CD8-positive, alpha-beta memory T cell (primary cell): ENCODE measurements at regions of chr17 and their contacts with region 1.

Region 1: DNA sequence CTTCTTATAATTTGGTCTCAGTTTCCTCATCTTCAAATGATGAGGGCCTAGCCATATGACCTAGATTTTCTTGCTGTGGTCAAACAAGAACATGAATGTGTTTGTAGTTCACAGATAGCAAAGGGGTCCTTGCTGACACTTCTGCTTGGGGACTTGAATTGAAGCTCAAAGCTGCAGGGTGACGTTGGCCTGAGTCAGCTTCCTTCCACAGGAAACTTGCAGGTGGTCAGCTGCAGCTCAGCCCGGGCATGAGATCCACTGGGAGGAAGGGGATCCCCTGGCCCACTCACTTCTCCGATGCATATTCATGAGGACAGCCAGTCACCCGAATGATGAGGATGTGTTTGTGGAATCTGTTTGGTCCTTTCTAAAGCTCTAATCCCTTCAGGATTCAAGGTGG is 42.6 kb upstream of the AXIN2 start:
- DNase-seq: no peak
- H3K4me3 ChIP-seq: no peak overlapping the region
- H3K4me3 Mint-ChIP-seq: no peak overlapping the region
- H3K27ac ChIP-seq: no peak overlapping the region
- H3K27ac Mint-ChIP-seq: no peak overlapping the region
- H3K4me1 ChIP-seq: no peaks in the 10 kb centered on the region
- H3K4me1 Mint-ChIP-seq: peaks cover 3 to 7% (median 4%) of the 10 kb centered on the region in 3 donors
- H3K27me3 ChIP-seq: no peaks in the 10 kb centered on the region
- H3K27me3 Mint-ChIP-seq: peaks cover 9 to 13% of the 10 kb centered on the region in 2 donors

Region 2: DNA sequence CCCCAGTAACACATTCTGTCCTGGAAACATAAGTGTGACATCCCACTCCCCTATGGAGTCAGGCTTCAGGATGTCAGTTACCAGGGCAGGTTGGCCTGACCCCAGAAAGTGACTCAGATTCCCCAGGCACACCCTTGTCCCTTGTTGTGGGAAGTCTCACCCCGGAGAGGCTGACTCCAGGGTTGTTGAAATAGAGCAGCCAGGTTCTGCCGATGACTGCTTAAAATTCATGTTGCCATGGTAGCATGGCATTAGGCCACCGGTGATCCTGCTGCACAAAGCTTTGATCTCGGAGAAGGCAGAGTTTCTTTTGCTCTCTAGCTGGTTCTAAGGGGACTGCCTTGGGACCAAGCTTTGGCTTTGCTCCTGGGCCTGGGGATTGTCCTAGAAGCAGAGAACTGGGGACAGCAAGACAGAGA is 360.3 kb before region 1 on chr17:
- CTCF ChIA-PET with region 1: no interaction called
- POLR2A ChIA-PET with region 1: interaction called, 15 read pairs
- DNase-seq: no peak
- H3K4me3 ChIP-seq: no peak overlapping the region
- H3K4me3 Mint-ChIP-seq: no peak overlapping the region
- H3K27ac ChIP-seq: no peak overlapping the region
- H3K27ac Mint-ChIP-seq: peak overlapping the region in 1 of 8 donors; percentile 21
- H3K4me1 ChIP-seq: no peaks in the 10 kb centered on the region
- H3K4me1 Mint-ChIP-seq: peaks cover 0 to 8% (median 5%) of the 10 kb centered on the region in 3 donors
- H3K27me3 ChIP-seq: no peaks in the 10 kb centered on the region
- H3K27me3 Mint-ChIP-seq: peaks cover 13 to 28% of the 10 kb centered on the region in 2 donors

Region 3: DNA sequence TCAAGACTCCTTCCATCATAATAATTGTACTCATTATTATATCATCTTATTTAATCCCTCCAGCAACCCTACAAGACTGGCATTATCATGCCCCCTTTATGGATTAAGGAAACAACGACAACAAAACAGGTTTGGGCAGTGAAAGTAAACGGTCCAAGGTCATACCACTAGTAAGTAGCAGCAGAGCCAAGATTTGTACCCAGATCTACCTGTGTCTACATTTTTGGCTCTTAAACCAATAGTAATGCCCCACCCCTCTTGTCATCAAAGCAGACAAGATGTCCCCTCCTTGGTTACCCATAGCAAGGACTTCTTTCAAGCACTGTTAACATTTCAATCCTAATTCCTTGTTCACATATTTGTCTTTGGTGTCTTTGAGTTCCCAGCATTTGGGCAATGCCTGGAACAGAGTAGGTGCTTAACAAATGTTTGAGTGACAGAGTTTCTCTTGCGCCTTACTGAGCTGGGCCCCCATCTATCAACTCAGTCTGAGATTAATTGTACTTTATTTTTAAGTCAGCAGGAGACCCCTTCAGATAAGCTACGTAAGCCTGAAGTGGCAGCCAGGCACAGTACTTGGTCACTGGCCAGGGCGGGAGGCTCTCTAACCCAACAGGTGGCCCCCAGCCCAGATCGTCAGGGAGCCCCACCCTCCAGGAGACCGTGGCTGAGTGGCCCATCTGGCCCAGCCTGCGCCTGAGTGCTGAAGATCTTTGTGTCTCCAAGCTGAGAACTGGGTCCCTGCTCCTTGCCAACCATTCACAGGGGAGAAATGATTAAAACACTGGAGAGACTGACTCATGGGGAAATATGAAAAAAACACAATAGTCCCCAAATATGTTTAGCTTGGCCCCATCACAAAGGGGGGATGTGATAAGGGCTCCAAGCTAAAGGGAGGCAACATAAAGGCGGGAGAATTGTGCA is 118.4 kb before region 1 on chr17:
- CTCF ChIA-PET with region 1: no interaction called
- POLR2A ChIA-PET with region 1: no interaction called
- DNase-seq: no peak
- H3K4me3 ChIP-seq: no peak overlapping the region
- H3K4me3 Mint-ChIP-seq: no peak overlapping the region
- H3K27ac ChIP-seq: no peak overlapping the region
- H3K27ac Mint-ChIP-seq: no peak overlapping the region
- H3K4me1 ChIP-seq: no peaks in the 10 kb centered on the region
- H3K4me1 Mint-ChIP-seq: peaks cover 0 to 4% (median 0%) of the 10 kb centered on the region in 3 donors
- H3K27me3 ChIP-seq: no peaks in the 10 kb centered on the region
- H3K27me3 Mint-ChIP-seq: peaks cover 10 to 19% of the 10 kb centered on the region in 2 donors

Region 4: GRCh38 chr17:65564793-65565192 is 39.3 kb before region 1 on chr17:
- CTCF ChIA-PET with region 1: no interaction called
- POLR2A ChIA-PET with region 1: no interaction called
- DNase-seq: no peak
- H3K4me3 ChIP-seq: no peak overlapping the region
- H3K4me3 Mint-ChIP-seq: no peak overlapping the region
- H3K27ac ChIP-seq: no peak overlapping the region
- H3K27ac Mint-ChIP-seq: no peak overlapping the region
- H3K4me1 ChIP-seq: peaks cover 14% of the 10 kb centered on the region
- H3K4me1 Mint-ChIP-seq: peaks cover 15 to 22% (median 18%) of the 10 kb centered on the region in 3 donors
- H3K27me3 ChIP-seq: no peaks in the 10 kb centered on the region
- H3K27me3 Mint-ChIP-seq: peaks cover 1 to 14% of the 10 kb centered on the region in 2 donors